Activated B cell treated with CpG ODN at 0.5 μM for 24 hours (primary cell): ENCODE measurements at regions of chr16 and their contacts with region 1.

Region 1: GRCh38 chr16:75622761-75623605 is at the start of gene ADAT1:
- DNase-seq: peak; percentile 93
- ATAC-seq: peak; percentile 97
- H3K4me3 Mint-ChIP-seq: peak within 1 kb of the TSS; percentile 98
- H3K27ac Mint-ChIP-seq: peak within 1 kb of the TSS; percentile 95
- H3K4me1 Mint-ChIP-seq: peaks cover 22% of the 10 kb centered on the region
- H3K27me3 Mint-ChIP-seq: no peaks in the 10 kb centered on the region
- CTCF ChIP-seq: no peak
- total RNA-seq, gene ADAT1: 52.7 and 57.2 TPM in 2 replicates

Region 2: DNA sequence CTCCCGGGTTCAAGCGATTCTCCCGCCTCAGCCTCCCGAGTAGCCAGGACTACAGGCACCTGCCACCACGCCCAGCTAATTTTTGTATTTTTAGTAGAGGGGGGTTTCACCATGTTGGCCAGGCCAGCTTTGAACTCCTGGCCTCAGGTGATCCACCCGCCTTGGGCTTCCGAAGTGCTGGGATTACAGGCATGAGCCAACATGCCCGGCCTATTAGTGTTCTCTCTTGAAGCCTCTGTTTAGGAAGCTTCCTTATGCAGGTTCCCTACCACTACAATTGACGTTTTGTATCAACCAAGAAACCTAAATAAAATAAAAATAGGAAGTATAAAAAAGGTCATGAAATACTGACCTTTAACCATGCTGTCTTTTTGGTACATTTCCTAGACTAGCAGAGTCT is 103.1 kb before region 1 on chr16:
- CTCF ChIA-PET with region 1: no interaction called
- POLR2A ChIA-PET with region 1: interaction called, 14 read pairs
- intact Hi-C with region 1: loop called (anchors 1 kb)
- DNase-seq: no peak
- ATAC-seq: no peak
- H3K4me3 Mint-ChIP-seq: no peak overlapping the region
- H3K27ac Mint-ChIP-seq: no peak overlapping the region
- H3K4me1 Mint-ChIP-seq: peaks cover 13% of the 10 kb centered on the region
- H3K27me3 Mint-ChIP-seq: no peaks in the 10 kb centered on the region
- CTCF ChIP-seq: no peak

Region 3: DNA sequence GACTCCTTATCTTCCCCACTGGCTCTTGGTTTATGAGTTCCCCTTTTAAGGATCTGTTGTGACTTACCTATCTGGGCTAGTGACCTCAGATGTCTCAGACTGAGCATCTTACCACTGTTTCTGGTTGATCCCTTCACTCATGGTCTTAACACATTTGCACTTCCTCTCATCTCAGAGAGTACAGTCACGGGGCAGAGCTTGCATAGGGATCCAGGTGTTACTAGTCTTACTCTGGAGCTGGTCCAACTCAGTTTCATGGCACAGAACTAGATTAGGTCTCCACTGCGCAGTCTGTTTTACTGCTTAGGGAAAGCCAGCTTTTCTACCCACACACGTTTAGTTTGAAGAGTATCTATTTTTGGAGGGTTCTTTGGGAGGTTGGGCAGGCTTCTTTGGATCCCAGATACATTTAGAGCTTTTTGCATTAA is 46.6 kb before region 1 on chr16:
- CTCF ChIA-PET with region 1: no interaction called
- POLR2A ChIA-PET with region 1: no interaction called
- intact Hi-C with region 1: no loop called
- DNase-seq: no peak
- ATAC-seq: no peak
- H3K4me3 Mint-ChIP-seq: no peak overlapping the region
- H3K27ac Mint-ChIP-seq: peak overlapping the region; percentile 22
- H3K4me1 Mint-ChIP-seq: peaks cover 57% of the 10 kb centered on the region
- H3K27me3 Mint-ChIP-seq: no peaks in the 10 kb centered on the region
- CTCF ChIP-seq: no peak

Region 4: DNA sequence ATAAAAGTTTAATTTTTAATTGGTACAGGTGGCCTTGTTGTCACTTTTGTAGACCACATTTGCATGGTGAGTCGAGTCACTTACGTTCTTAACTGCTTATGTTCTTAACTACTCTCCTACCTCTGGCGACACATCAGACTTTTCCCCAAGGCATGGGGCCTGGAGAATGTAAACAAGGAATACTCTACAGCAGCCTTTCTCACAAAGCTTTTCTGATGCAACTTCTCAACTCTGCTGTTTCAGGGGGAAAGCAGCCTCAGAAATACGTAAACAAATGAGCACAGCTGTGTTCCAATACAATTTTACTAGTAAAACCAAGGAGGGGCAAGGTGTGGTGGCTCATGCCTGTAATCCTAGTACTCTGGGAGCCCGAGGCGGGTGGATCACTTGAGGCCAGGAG is 17.6 kb after region 1 on chr16:
- CTCF ChIA-PET with region 1: no interaction called
- POLR2A ChIA-PET with region 1: interaction called, 10 read pairs
- intact Hi-C with region 1: no loop called
- DNase-seq: no peak
- ATAC-seq: no peak
- H3K4me3 Mint-ChIP-seq: no peak overlapping the region
- H3K27ac Mint-ChIP-seq: no peak overlapping the region
- H3K4me1 Mint-ChIP-seq: peaks cover 17% of the 10 kb centered on the region
- H3K27me3 Mint-ChIP-seq: no peaks in the 10 kb centered on the region
- CTCF ChIP-seq: no peak